Right ventricle myocardium inferior (tissue), 1 donor: ENCODE measurements at regions of chr2 and their contacts with region 1.

Region 1: DNA sequence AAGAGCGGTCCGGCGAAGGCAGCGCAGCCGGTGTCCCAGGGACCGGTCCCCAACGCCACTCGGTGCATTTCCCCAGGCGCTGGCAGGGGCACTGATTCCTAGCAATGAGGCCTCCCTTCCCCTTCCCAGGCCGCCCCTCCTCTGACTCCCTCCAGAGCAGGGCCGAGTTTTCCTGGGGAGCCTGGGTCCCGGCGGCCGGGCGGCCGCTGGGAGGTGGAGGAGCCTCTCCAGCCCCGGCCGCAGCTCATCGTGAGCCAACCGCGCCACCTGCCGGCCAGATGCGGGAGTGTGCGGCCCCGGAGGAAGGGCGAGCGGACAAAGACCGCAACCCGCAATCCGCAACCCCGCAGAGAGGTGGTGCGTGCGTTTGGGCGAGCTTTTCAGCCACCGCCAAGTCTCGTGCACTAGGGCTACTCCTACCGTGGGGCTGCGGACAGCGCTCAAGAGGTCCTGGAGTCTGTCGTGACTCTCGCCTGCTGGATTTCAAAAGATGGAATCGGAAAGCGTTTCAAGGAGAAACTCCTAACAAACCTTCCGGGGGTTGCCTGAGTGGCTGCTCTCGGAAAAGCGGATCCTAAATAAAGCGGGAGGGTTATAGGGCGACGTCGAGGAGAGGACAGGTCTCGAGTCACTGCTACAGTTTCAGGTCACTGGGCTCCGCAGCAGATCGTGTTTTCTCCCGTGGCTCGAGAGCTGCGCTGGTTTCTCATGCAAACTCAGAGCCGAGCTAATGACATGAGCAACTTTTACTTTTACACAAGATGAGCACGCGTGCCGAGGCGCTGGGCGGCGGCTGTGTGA is 1.5 kb upstream of the EPHA4 start:
- DNase-seq: peak; percentile 91
- ATAC-seq: peak; percentile 88

Region 2: DNA sequence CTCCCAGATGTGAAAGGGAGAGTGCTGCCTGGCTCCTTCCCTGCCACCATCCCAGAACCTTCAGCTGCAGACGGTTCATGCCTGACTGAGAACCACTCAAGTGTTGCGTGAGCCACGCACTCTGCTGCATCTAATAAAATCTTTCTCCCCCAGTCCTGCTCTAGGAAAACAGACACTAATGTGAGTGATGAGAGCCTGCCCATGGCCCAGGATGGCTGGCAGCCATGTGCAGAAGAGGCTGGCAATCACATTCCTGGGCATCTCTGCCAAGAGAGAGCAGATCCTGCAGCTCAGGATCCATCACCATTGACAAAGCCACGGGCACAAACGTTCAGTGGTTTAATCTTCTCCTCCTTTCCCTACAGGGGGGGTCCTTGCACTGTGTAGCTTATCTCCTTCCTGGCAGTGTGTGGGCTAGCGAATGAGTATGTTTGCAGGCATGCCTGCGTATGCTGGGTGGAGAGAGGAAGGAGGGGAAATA is 1468.7 kb before region 1 on chr2:
- intact Hi-C with region 1: loop called (anchors 10 kb)
- DNase-seq: no peak
- ATAC-seq: peak; percentile 69

Region 3: GRCh38 chr2:221104361-221104811 is 469.2 kb before region 1 on chr2:
- intact Hi-C with region 1: loop called (anchors 1 kb)
- DNase-seq: peak; percentile 92
- ATAC-seq: peak; percentile 98

Region 4: DNA sequence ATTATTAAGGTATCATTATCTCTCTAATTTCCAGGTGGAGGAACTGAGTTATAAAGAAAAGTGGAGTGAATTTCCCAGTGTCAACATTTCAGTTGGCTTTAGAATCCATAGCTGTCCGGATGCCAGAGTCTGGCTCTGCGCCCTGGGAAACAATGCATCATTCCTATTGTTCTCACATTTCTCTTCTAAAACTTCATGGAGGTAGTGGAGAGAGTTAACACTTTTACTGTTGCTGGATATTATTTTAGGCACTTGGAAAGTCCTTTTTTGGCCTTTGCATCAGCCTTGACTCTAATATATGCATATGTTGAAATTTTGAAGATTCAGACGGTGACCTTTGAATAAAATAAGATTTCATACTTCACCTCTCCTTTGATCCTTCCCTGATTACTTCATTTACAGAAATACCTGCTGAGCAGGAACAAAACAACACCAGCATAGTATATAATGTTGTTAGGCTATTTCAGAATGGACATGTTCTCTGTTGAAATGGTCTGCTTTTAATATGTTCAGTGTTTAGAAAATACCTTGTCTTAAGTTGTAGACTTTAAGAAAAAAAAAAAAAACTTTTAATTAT is 150.3 kb before region 1 on chr2:
- intact Hi-C with region 1: loop called (anchors 5 kb)
- DNase-seq: no peak
- ATAC-seq: no peak